CD8-positive, alpha-beta T cell (primary cell): ENCODE measurements at regions of chr1 and their contacts with region 1.

Region 1: DNA sequence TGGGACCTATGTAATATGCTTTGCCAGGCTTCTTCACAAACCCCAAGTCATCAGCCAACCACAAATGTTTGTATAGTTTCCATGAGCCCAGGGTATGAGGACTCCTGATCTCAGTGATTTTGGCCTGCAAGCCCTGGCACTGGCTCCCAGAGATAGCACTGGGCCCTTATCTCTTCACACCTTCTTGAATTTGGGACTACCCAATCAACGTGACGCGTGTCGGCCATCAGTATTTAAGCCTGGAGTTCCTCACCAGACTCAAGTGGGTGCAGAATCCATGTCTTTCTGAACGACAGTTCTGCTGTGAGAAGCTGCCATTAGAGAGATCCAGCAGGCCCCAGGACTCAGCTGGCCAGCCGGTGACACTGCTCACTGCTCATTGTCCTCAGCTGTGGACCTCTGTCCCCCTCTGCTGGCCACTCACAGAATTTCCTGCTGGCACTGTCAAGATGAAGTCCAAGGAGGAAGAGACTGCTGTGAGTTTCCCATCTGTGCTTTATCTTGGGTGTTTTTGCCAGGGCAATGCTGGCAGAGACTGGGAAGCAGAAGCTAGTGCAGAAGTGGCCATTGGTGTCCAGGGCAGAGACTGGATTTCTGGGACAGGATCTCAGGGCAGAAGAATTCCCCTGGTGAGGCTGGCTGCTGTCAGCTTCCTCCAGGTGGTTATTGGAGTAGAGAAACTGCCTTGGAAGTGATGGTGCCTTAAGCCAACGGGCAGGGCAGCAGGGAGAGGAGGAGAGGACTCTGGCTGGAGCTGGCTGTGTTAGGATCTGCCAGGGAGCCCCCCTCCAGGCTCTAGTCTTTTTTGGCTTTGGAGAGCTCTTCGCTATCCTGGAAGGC is 28.4 kb downstream of the TMCC2 start:
- DNase-seq: peak; percentile 73 to 91 (median 83)
- ATAC-seq: peak; percentile 99
- H3K4me3 ChIP-seq: no peak overlapping the region
- H3K4me3 Mint-ChIP-seq: no peak overlapping the region
- H3K27ac ChIP-seq: no peak overlapping the region
- H3K27ac Mint-ChIP-seq: no peak overlapping the region
- H3K4me1 ChIP-seq: no peaks in the 10 kb centered on the region
- H3K4me1 Mint-ChIP-seq: no peaks in the 10 kb centered on the region
- H3K27me3 ChIP-seq: no peaks in the 10 kb centered on the region
- H3K27me3 Mint-ChIP-seq: no peaks in the 10 kb centered on the region
- CTCF ChIP-seq: peak; percentile 95

Region 2: DNA sequence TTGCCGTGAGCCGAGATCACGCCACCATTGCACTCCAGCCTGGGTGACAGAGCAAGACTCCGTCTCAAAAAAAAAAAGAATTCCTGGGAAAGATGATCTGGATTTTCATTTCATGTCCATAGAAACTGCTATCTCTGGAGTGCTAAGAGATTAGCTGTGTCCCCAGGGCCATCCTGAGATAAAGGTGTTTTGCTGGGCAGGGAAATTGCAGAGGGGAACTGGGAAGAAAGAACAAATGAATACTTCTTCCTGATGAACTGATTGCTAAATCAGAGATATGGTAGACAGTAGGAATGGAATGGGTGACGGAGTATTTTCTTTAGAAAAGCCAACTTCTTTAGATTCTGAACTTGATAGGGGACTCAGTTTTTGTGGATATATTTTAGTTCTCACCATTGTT is 1375.6 kb before region 1 on chr1:
- CTCF ChIA-PET with region 1: no interaction called
- POLR2A ChIA-PET with region 1: no interaction called
- intact Hi-C with region 1: no loop called
- DNase-seq: no peak
- ATAC-seq: no peak
- H3K4me3 ChIP-seq: no peak overlapping the region
- H3K4me3 Mint-ChIP-seq: no peak overlapping the region
- H3K27ac ChIP-seq: no peak overlapping the region
- H3K27ac Mint-ChIP-seq: no peak overlapping the region
- H3K4me1 ChIP-seq: no peaks in the 10 kb centered on the region
- H3K4me1 Mint-ChIP-seq: no peaks in the 10 kb centered on the region
- H3K27me3 ChIP-seq: no peaks in the 10 kb centered on the region
- H3K27me3 Mint-ChIP-seq: no peaks in the 10 kb centered on the region
- CTCF ChIP-seq: no peak

Region 3: DNA sequence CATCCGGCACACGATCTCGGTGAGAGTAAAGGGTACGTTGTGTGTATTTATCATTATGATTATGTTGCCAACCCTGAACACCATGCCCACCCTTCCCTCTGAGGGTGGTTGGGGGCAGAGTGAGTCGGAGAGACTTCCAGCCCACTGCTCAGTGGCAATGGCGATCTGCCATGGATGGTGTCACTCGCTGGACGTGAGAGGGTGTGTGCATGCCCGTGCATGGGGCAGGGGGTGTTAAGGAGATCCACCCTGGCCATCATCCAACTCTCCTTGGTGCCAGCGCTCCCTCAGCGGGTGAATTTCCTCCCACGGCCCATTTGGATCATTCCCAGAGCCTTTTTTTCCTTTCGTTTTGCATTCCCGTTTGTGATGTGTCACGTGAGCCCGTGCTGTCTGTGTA is 287.2 kb before region 1 on chr1:
- CTCF ChIA-PET with region 1: interaction called, 66 read pairs
- POLR2A ChIA-PET with region 1: no interaction called
- intact Hi-C with region 1: no loop called
- DNase-seq: no peak
- ATAC-seq: no peak
- H3K4me3 ChIP-seq: no peak overlapping the region
- H3K4me3 Mint-ChIP-seq: no peak overlapping the region
- H3K27ac ChIP-seq: no peak overlapping the region
- H3K27ac Mint-ChIP-seq: no peak overlapping the region
- H3K4me1 ChIP-seq: no peaks in the 10 kb centered on the region
- H3K4me1 Mint-ChIP-seq: no peaks in the 10 kb centered on the region
- H3K27me3 ChIP-seq: no peaks in the 10 kb centered on the region
- H3K27me3 Mint-ChIP-seq: peaks cover 18% of the 10 kb centered on the region
- CTCF ChIP-seq: no peak

Region 4: GRCh38 chr1:205061665-205062069 is 194.5 kb before region 1 on chr1:
- CTCF ChIA-PET with region 1: interaction called, 16 read pairs
- POLR2A ChIA-PET with region 1: no interaction called
- intact Hi-C with region 1: loop called in 1 of 2 experiments (anchors 5 kb)
- DNase-seq: peak; percentile 48 to 76 (median 71)
- ATAC-seq: peak; percentile 86
- H3K4me3 ChIP-seq: no peak overlapping the region
- H3K4me3 Mint-ChIP-seq: no peak overlapping the region
- H3K27ac ChIP-seq: no peak overlapping the region
- H3K27ac Mint-ChIP-seq: no peak overlapping the region
- H3K4me1 ChIP-seq: no peaks in the 10 kb centered on the region
- H3K4me1 Mint-ChIP-seq: peaks cover 2% of the 10 kb centered on the region
- H3K27me3 ChIP-seq: no peaks in the 10 kb centered on the region
- H3K27me3 Mint-ChIP-seq: no peaks in the 10 kb centered on the region
- CTCF ChIP-seq: peak; percentile 74

Region 5: DNA sequence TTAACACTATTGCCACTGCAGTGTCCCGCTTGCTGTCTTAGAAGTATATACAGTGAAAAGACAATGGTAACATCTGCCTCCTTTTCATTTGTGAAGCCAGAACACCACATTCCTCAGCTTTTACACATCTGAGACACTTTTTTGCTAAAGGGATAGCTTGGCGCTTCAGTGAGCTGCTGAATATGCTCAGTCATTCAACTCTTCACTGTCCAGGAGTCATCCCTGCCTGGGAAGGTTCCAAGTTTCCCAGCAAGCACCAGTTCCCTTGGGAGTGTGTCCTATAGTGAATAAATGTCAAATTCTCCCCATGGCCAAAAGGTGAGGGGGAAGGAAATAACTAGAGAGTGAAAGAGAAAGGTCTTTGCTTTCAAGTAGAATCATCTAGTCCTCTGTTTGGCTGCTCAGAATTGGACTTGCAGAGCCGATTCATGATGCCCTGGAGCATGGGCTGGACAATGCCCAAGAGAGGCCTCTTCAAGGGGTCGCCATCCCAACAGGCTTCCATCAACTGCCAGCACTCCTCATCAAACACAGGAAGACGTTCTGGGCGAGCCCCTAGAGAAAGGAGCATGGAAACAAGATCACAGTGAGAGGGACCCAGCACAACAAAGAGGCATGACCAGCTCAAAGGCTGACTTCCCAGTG is 108.8 kb before region 1 on chr1:
- CTCF ChIA-PET with region 1: interaction called, 22 read pairs
- POLR2A ChIA-PET with region 1: no interaction called
- intact Hi-C with region 1: no loop called
- DNase-seq: no peak
- ATAC-seq: no peak
- H3K4me3 ChIP-seq: no peak overlapping the region
- H3K4me3 Mint-ChIP-seq: no peak overlapping the region
- H3K27ac ChIP-seq: no peak overlapping the region
- H3K27ac Mint-ChIP-seq: no peak overlapping the region
- H3K4me1 ChIP-seq: no peaks in the 10 kb centered on the region
- H3K4me1 Mint-ChIP-seq: no peaks in the 10 kb centered on the region
- H3K27me3 ChIP-seq: no peaks in the 10 kb centered on the region
- H3K27me3 Mint-ChIP-seq: no peaks in the 10 kb centered on the region
- CTCF ChIP-seq: no peak

Region 6: DNA sequence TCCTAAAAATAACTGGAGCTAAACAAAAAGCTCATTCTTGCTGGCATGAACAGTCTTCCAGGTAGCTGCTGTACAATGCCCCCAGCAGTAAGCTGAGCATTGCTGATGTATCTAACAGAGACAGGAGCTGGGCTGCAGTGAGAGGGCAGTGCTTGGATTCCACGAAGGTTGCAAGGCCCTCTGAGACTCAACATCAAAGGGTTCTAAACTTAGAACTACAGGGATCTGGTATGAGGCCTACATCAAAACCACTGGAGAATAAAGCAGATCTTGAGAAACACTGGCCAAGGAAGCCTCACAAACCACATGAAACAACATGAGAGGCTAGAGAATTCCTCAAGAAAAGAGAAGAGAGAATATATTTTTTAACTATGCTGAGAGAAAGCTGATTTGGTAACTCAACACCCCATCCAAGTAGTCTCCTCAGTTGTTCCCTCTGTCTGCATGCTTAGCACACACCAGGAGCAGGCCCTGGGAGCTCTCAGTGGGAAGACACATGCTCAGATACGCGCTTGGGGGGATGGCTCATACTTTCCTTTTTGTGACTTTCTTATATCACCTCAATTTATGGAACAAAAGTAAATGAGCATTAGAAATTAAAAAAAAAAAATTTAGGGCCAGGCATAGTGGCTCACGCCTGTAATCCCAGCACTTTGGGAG is 72.4 kb before region 1 on chr1:
- CTCF ChIA-PET with region 1: no interaction called
- POLR2A ChIA-PET with region 1: no interaction called
- intact Hi-C with region 1: loop called in 1 of 2 experiments (anchors 10 kb)
- DNase-seq: no peak
- ATAC-seq: no peak
- H3K4me3 ChIP-seq: no peak overlapping the region
- H3K4me3 Mint-ChIP-seq: peak overlapping the region; percentile 17
- H3K27ac ChIP-seq: no peak overlapping the region
- H3K27ac Mint-ChIP-seq: peak overlapping the region; percentile 2
- H3K4me1 ChIP-seq: peaks cover 21% of the 10 kb centered on the region
- H3K4me1 Mint-ChIP-seq: peaks cover 46% of the 10 kb centered on the region
- H3K27me3 ChIP-seq: no peaks in the 10 kb centered on the region
- H3K27me3 Mint-ChIP-seq: no peaks in the 10 kb centered on the region
- CTCF ChIP-seq: no peak

Region 7: GRCh38 chr1:205237526-205238484 is 18.4 kb before region 1 on chr1:
- CTCF ChIA-PET with region 1: interaction called, 203 read pairs
- POLR2A ChIA-PET with region 1: no interaction called
- intact Hi-C with region 1: no loop called
- DNase-seq: peak in 1 of 9 experiments; percentile 36
- ATAC-seq: no peak
- H3K4me3 ChIP-seq: no peak overlapping the region
- H3K4me3 Mint-ChIP-seq: no peak overlapping the region
- H3K27ac ChIP-seq: no peak overlapping the region
- H3K27ac Mint-ChIP-seq: no peak overlapping the region
- H3K4me1 ChIP-seq: no peaks in the 10 kb centered on the region
- H3K4me1 Mint-ChIP-seq: peaks cover 10% of the 10 kb centered on the region
- H3K27me3 ChIP-seq: no peaks in the 10 kb centered on the region
- H3K27me3 Mint-ChIP-seq: no peaks in the 10 kb centered on the region
- CTCF ChIP-seq: no peak

Region 8: GRCh38 chr1:205287767-205288559 is 31.8 kb after region 1 on chr1:
- CTCF ChIA-PET with region 1: no interaction called
- POLR2A ChIA-PET with region 1: no interaction called
- intact Hi-C with region 1: no loop called
- DNase-seq: peak; percentile 63 to 97 (median 87)
- ATAC-seq: peak; percentile 71
- H3K4me3 ChIP-seq: peak overlapping the region; percentile 11 to 55
- H3K4me3 Mint-ChIP-seq: peak overlapping the region; percentile 83
- H3K27ac ChIP-seq: peak overlapping the region; percentile 56 to 71
- H3K27ac Mint-ChIP-seq: peak overlapping the region; percentile 96
- H3K4me1 ChIP-seq: peaks cover 83% of the 10 kb centered on the region
- H3K4me1 Mint-ChIP-seq: peaks cover 83% of the 10 kb centered on the region
- H3K27me3 ChIP-seq: no peaks in the 10 kb centered on the region
- H3K27me3 Mint-ChIP-seq: no peaks in the 10 kb centered on the region
- CTCF ChIP-seq: no peak

Region 9: GRCh38 chr1:205346956-205347576 is 90.9 kb after region 1 on chr1:
- CTCF ChIA-PET with region 1: interaction called, 1,393 read pairs
- POLR2A ChIA-PET with region 1: no interaction called
- intact Hi-C with region 1: no loop called
- DNase-seq: no peak
- ATAC-seq: no peak
- H3K4me3 ChIP-seq: no peak overlapping the region
- H3K4me3 Mint-ChIP-seq: no peak overlapping the region
- H3K27ac ChIP-seq: no peak overlapping the region
- H3K27ac Mint-ChIP-seq: no peak overlapping the region
- H3K4me1 ChIP-seq: peaks cover 13% of the 10 kb centered on the region
- H3K4me1 Mint-ChIP-seq: peaks cover 10% of the 10 kb centered on the region
- H3K27me3 ChIP-seq: peaks cover 14 to 17% of the 10 kb centered on the region in 2 experiments
- H3K27me3 Mint-ChIP-seq: peaks cover 46% of the 10 kb centered on the region
- CTCF ChIP-seq: no peak